SK-N-SH (cell line): ENCODE measurements at regions of chr2 and their contacts with region 1.

Region 1: GRCh38 chr2:42328148-42328833 is 32.7 kb downstream of the COX7A2L start:
- DNase-seq: no peak
- H3K4me3 ChIP-seq: no peak overlapping the region
- H3K27ac ChIP-seq: peak overlapping the region in 1 of 2 experiments; percentile 34; a peak in 2 of 4 replicates
- H3K4me1 ChIP-seq: no peaks in the 10 kb centered on the region; a peak in 1 of 4 replicates
- H3K27me3 ChIP-seq: no peaks in the 10 kb centered on the region
- CTCF ChIP-seq: peak; percentile 82
- EP300 ChIP-seq: no peak
- RAD21 ChIP-seq: peak; percentile 70

Region 2: GRCh38 chr2:42309366-42309765 is 18.9 kb before region 1 on chr2:
- CTCF ChIA-PET with region 1: interaction called, 10 read pairs
- POLR2A ChIA-PET with region 1: no interaction called
- DNase-seq: no peak
- H3K4me3 ChIP-seq: no peak overlapping the region
- H3K27ac ChIP-seq: no peak overlapping the region
- H3K4me1 ChIP-seq: peaks cover 0 to 4% of the 10 kb centered on the region in 2 experiments; a peak in 1 of 4 replicates
- H3K27me3 ChIP-seq: no peaks in the 10 kb centered on the region
- CTCF ChIP-seq: no peak
- EP300 ChIP-seq: no peak
- RAD21 ChIP-seq: no peak

Region 3: DNA sequence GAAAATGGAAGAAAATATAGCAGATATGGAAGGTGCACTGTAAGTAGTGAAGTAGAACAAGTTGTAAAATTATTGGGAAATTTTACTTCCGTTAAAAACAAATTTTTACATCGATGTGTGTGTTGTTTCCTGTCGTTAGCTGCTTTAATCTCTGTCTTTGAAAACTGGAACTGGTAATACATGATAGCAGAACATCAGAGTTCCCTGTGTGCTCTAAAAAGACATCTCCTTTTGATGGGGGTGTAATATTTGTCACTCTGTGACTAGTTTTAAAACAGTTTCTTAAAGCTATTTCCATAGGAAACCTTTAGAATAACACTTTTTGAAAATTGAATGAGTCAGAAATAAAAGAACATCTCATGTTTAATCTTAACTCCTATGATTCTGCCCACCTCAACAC is 10.8 kb before region 1 on chr2:
- CTCF ChIA-PET with region 1: interaction called, 16 read pairs
- POLR2A ChIA-PET with region 1: no interaction called
- DNase-seq: no peak
- H3K4me3 ChIP-seq: no peak overlapping the region
- H3K27ac ChIP-seq: no peak overlapping the region
- H3K4me1 ChIP-seq: peaks cover 0 to 27% of the 10 kb centered on the region in 2 experiments; a peak in 1 of 4 replicates
- H3K27me3 ChIP-seq: no peaks in the 10 kb centered on the region
- CTCF ChIP-seq: no peak
- EP300 ChIP-seq: no peak
- RAD21 ChIP-seq: no peak

Region 4: DNA sequence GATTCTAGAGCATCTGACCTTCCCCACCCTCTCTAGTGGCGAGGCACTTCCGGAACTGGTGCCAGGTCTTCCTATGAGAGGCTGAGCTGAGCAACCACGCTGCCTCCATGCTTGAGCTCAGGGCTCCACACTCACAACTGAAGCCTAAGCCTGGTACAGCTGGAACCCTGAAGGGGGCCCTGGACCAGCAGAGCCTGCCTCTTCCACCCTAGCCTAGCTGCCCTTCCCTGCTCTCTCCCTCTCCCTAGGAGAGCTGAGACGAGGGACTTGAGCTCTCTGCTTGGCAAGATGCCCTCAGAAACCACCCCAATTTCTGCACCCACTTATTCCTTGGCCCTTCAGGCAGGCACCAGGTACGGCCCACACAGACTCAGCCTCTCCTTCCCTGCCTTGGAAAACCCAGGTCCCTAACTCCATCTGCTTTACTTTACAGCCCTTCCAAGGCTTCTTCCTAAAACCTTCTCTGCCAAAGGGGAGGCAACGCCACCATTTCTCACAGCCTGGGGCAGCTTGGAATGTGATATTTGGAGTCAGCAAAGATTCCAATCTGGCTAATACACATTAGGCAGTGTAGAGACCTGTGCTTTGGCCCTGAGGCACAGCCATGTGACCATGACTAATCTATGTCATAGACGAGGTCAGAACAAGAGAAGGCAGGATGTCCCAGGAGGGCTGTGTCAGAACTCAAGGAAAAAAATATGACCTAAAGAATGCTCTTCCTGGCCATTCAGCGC is 13.9 kb after region 1 on chr2:
- CTCF ChIA-PET with region 1: interaction called, 28 read pairs
- POLR2A ChIA-PET with region 1: interaction called, 3 read pairs
- DNase-seq: peak; percentile 58
- H3K4me3 ChIP-seq: no peak overlapping the region
- H3K27ac ChIP-seq: peak overlapping the region; percentile 41 to 92; a peak in 3 of 4 replicates
- H3K4me1 ChIP-seq: peaks cover 17 to 19% of the 10 kb centered on the region in 2 experiments; a peak in 3 of 4 replicates
- H3K27me3 ChIP-seq: no peaks in the 10 kb centered on the region
- CTCF ChIP-seq: no peak
- EP300 ChIP-seq: no peak; a peak in 1 of 4 replicates
- RAD21 ChIP-seq: no peak

Region 5: GRCh38 chr2:42673989-42674579 is 345.8 kb after region 1 on chr2:
- CTCF ChIA-PET with region 1: no interaction called
- POLR2A ChIA-PET with region 1: no interaction called
- DNase-seq: no peak
- H3K4me3 ChIP-seq: no peak overlapping the region
- H3K27ac ChIP-seq: no peak overlapping the region
- H3K4me1 ChIP-seq: no peaks in the 10 kb centered on the region
- H3K27me3 ChIP-seq: no peaks in the 10 kb centered on the region
- CTCF ChIP-seq: no peak
- EP300 ChIP-seq: no peak
- RAD21 ChIP-seq: no peak